Sciatic nerve (tissue), 2 donors: ENCODE measurements at regions of chr14 and their contacts with region 1.

Region 1: DNA sequence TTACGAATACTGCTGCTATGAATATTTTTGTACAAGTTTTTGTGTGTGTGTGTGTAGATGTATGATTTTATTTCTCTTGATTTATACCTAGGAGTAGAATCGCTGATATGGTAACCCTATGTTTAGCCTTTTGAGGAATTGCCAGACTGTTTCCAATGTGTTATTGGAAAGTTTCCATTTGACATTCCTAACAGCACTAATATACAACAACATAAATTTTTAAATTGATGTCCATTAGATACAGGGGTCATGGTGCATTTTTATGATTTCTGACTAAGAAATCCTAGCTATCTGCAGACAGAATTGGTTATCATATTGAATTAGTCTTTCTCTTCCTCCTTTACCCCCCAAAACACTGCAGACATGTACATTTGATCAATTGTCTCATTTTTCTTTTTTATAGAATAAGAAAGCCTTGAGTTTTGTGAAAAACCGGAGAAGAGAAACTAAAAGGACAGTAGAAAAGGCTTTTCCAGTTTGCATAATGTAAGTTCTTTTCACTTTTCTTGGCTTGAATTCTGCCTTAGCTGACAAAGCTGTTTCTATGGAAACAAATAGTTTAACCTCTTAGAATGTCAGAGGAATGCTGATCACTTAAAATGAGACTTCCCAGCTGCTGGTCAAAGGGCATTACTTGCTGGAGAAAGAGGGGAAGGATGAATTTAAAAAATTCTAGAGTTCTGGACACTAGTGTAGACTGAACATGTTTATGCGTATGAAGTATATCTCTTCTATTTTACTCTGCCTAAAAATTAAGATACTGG is 28.2 kb downstream of the PALS1 start:
- DNase-seq: no peak
- ATAC-seq: peak; percentile 78

Region 2: GRCh38 chr14:66716227-66716626 is 553.3 kb before region 1 on chr14:
- intact Hi-C with region 1: loop called (anchors 5 kb)
- DNase-seq: no peak
- ATAC-seq: no peak

Region 3: GRCh38 chr14:67285876-67286452 is 16.5 kb after region 1 on chr14:
- intact Hi-C with region 1: no loop called
- DNase-seq: no peak
- ATAC-seq: no peak